Heart right ventricle (tissue), 16 donors: ENCODE measurements at regions of chr17 and their contacts with region 1.

Region 1: DNA sequence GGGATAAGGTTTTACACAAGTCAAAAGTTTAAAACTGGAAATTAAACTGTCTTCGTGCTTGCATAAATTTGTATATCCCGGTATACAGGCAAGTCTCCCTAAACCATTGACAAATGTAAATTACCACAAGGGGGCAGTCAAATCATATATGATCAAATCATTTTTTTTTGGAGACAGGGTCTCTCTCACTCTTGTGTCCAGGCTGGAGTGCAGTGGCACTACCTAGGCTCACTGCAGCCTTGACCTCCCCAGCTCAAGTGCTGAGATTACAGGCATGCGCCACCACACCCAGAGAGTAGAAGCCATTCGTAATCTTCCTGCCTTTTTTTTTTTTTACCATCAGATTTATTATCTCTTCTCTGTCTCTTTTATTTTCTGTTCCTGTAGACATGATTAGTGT is 18.5 kb downstream of the TOP2A start:
- DNase-seq: no peak
- ATAC-seq: peak in 4 of 8 donors; percentile 13 to 57 (median 38)
- H3K4me3 ChIP-seq: no peak overlapping the region
- H3K27ac ChIP-seq: no peak overlapping the region
- H3K4me1 ChIP-seq: no peaks in the 10 kb centered on the region
- H3K27me3 ChIP-seq: no peaks in the 10 kb centered on the region
- CTCF ChIP-seq: peak; percentile 30 to 78 (median 68)

Region 2: DNA sequence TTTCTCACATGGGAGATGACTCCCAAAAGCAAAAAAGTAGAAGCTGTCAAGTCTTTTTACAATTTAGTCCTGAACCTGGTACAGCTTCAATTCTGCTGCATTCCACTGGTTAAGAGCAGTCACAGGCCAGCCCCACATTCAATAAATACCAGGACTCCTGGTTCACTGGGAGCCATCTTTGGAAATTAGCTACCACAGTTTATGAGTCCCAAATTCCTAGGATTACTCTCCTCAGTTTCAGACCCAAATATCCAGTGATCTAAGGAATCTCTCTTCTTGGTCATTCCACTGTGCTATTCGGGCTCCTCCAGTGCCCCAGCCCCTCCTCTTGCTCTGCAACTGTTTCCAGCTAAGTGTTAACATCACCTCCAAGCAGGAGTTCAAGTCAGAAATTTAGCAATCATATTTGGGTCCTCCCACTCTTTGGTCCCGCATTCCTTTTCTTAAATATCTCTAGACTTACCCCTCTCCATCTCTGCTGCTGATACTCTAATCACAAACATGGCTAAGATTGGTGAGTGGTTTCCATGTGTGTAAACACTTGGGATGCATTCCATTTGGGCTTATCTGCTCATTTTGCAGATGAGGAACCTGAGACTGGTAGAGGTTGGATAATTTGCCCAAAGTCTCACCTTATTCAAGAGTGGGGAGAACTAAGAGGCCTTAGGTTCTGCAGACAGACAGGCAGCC is 189.6 kb before region 1 on chr17:
- intact Hi-C with region 1: no loop called
- DNase-seq: no peak
- ATAC-seq: no peak
- H3K4me3 ChIP-seq: no peak overlapping the region
- H3K27ac ChIP-seq: no peak overlapping the region
- H3K4me1 ChIP-seq: no peaks in the 10 kb centered on the region
- H3K27me3 ChIP-seq: no peaks in the 10 kb centered on the region
- CTCF ChIP-seq: no peak

Region 3: GRCh38 chr17:40433551-40434415 is 34.6 kb after region 1 on chr17:
- intact Hi-C with region 1: loop called in 2 of 10 experiments (anchors 2 to 5 kb)
- DNase-seq: no peak
- ATAC-seq: peak in 4 of 8 donors; percentile 39 to 45 (median 45)
- H3K4me3 ChIP-seq: no peak overlapping the region
- H3K27ac ChIP-seq: peak overlapping the region in 7 of 10 donors; percentile 2 to 65 (median 50)
- H3K4me1 ChIP-seq: peaks cover 5 to 33% (median 26%) of the 10 kb centered on the region in 9 donors
- H3K27me3 ChIP-seq: no peaks in the 10 kb centered on the region
- CTCF ChIP-seq: peak; percentile 8 to 59 (median 48)

Region 4: GRCh38 chr17:40480501-40481003 is 81.4 kb after region 1 on chr17:
- intact Hi-C with region 1: loop called in 3 of 10 experiments (anchors 2 to 5 kb)
- DNase-seq: peak in 1 of 2 donors; percentile 37
- ATAC-seq: peak in 6 of 8 donors; percentile 13 to 54 (median 40)
- H3K4me3 ChIP-seq: no peak overlapping the region
- H3K27ac ChIP-seq: peak overlapping the region in 1 of 10 donors; percentile 82
- H3K4me1 ChIP-seq: peaks cover 0 to 42% (median 6%) of the 10 kb centered on the region in 9 donors
- H3K27me3 ChIP-seq: no peaks in the 10 kb centered on the region
- CTCF ChIP-seq: no peak

Region 5: GRCh38 chr17:40536295-40537171 is 137.3 kb after region 1 on chr17:
- intact Hi-C with region 1: loop called in 6 of 10 experiments (anchors 1 to 5 kb)
- DNase-seq: peak; percentile 70 to 80
- ATAC-seq: peak; percentile 40 to 81 (median 62)
- H3K4me3 ChIP-seq: no peak overlapping the region
- H3K27ac ChIP-seq: peak overlapping the region; percentile 5 to 97 (median 89)
- H3K4me1 ChIP-seq: peaks cover 37 to 96% (median 82%) of the 10 kb centered on the region in 9 donors
- H3K27me3 ChIP-seq: no peaks in the 10 kb centered on the region
- CTCF ChIP-seq: no peak